Activated CD8-positive, alpha-beta T cell treated with anti-CD3 and anti-CD28 coated beads, Interleukin-2, amount 10 ng/mL, durations not matched to agents 7 days and 5 days (primary cell): ENCODE measurements at regions of chr12 and their contacts with region 1.

Region 1: GRCh38 chr12:56097738-56098137 is 6.6 kb upstream of the PA2G4 start:
- DNase-seq: no peak
- ATAC-seq: no peak
- H3K4me3 Mint-ChIP-seq: no peak overlapping the region
- H3K27ac Mint-ChIP-seq: no peak overlapping the region
- H3K4me1 Mint-ChIP-seq: peaks cover 23% of the 10 kb centered on the region
- H3K27me3 Mint-ChIP-seq: peaks cover 25% of the 10 kb centered on the region

Region 2: GRCh38 chr12:56084958-56085543 is 12.7 kb before region 1 on chr12:
- CTCF ChIA-PET with region 1: interaction called, 45 read pairs
- POLR2A ChIA-PET with region 1: interaction called, 26 read pairs
- DNase-seq: peak; percentile 59
- ATAC-seq: peak; percentile 79
- H3K4me3 Mint-ChIP-seq: no peak overlapping the region
- H3K27ac Mint-ChIP-seq: no peak overlapping the region
- H3K4me1 Mint-ChIP-seq: peaks cover 30% of the 10 kb centered on the region
- H3K27me3 Mint-ChIP-seq: peaks cover 19% of the 10 kb centered on the region